ENCODE measurements at regions of chr1 and their contacts with region 1.

Region 1: DNA sequence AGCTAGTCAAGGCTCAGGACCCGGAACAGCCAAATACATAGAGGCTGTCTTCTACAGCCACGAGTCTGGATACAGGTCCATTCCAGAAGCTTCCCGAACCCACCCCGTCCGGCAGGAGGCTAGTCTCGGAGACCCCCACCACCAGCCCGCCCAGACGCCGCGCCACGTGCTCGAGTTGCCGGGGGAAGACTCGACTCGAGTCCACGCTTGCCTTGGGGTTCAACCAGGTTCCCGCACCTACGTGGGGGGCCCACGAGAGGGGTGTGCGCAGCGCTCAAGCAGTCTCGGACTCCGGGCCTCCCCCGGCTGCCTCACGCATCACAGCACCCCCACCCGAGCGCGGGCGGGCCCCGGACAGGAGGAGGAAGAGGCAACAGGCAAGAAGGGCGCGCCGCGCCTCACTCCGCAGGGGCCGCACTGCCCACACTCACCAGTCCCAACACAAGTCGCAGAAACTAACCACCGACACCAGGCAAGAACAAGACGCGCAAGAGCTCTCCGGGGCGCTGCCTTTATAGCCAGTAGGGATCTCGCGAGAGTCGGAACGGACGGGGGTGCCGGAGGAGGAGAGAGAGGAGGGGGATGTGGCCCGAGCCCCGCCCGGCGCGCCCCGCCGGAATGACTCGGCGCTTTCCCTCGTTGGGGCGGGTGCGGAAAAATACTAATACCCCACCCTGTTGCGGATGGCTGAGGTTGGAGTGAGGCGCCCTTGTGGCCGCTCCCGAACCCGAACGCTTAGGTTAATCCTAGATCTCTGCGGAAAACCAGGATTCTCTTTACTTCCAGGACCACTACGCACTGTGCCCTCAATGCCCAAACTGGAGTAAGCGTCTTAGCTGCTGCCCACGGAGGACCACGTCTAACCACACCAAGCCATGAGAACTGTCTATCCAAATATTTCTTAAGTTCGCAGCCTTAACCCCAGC is at the start of gene PRDX1:
- DNase-seq: peak; percentile 98
- ATAC-seq: peak; percentile 96 to 98 (median 97)
- H3K4me3 ChIP-seq: peak within 1 kb of the TSS; percentile 58 to 96 (median 86)
- H3K27ac ChIP-seq: peak within 1 kb of the TSS; percentile 73 to 98 (median 93)
- H3K4me1 ChIP-seq: peaks cover 2 to 44% (median 25%) of the 10 kb centered on the region in 9 donors
- H3K27me3 ChIP-seq: peaks cover 0 to 7% (median 0%) of the 10 kb centered on the region in 7 donors
- CTCF ChIP-seq: peak in 4 of 9 donors; percentile 7 to 37 (median 28)
- total RNA-seq, gene PRDX1: 212 to 421 (median 289) TPM

Region 2: DNA sequence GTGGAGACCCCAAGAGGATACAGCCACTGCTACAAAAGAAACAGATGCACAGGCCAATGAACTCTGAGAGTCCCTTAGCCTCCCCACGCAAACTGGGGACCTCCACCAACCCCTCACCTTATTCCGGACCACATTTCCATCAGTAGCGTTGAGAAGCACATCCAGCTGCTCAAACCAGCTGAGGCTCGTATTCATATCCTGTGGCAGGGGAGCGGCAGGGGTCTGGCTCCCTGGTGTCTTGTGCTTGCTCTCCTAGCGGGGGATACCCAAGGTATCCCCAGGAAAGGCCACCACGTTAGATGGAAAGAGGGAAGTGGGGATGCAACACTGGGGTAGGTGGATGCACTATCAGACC is 22.3 kb before region 1 on chr1:
- intact Hi-C with region 1: loop called in 1 of 10 experiments (anchors 1 kb)
- DNase-seq: no peak
- ATAC-seq: peak in 1 of 8 donors; percentile 2
- H3K4me3 ChIP-seq: peak overlapping the region; percentile 26 to 74 (median 62)
- H3K27ac ChIP-seq: peak overlapping the region in 7 of 10 donors; percentile 2 to 81 (median 73)
- H3K4me1 ChIP-seq: peaks cover 0 to 32% (median 17%) of the 10 kb centered on the region in 9 donors
- H3K27me3 ChIP-seq: no peaks in the 10 kb centered on the region
- CTCF ChIP-seq: no peak

Region 3: DNA sequence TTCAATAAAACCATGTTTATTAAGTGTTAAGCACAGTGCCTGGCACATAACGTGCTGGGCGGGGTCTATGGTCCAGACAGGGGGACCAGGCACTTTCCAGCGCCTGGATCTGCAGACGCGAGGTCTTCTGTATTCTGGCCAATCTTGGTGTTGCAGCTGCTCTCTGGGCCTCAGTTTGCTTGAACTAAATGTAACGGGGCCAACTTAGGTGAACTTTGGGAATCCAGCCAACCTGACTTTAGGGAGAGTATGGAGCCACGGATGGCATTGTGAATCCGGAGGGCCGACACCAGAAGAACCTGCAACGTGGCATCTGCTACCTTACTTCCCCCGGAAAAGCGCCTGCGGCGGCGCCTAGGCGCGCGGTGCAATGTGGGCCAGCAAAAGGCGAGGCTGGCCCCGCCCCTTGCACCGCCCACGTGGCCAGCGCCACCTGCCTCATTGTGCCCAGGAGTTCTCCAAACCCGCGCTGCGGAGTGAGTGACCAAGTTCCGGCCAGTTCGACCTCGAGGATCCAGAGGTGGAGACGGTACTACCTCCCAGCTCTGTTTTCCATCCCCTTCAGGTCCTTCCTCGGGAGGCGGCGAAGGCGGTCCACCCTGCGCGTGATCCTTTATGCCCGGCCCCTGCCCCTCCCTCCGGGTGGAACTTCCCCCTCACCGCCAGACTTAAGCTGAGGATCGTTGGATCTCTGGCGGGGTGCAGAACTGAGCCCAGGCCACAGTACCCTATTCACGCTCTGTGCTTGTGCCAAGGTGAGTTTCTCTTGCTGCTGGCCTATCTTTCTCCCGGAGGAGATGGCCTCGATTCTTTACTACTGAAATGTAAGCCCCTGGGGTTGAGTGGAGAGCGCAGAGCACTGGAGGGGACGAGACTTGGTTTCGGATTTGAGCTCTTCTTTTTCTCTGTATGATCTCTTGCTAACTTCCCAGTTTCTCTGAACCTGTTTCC is 29.0 kb after region 1 on chr1 and contains the start of gene AKR1A1:
- intact Hi-C with region 1: loop called in 2 of 10 experiments (anchors 2 kb)
- DNase-seq: peak; percentile 85 to 88
- ATAC-seq: peak; percentile 97 to 99 (median 98)
- H3K4me3 ChIP-seq: peak within 1 kb of the TSS; percentile 50 to 87 (median 70)
- H3K27ac ChIP-seq: peak within 1 kb of the TSS; percentile 49 to 91 (median 83)
- H3K4me1 ChIP-seq: peaks cover 0 to 26% (median 20%) of the 10 kb centered on the region in 9 donors
- H3K27me3 ChIP-seq: no peaks in the 10 kb centered on the region
- CTCF ChIP-seq: peak in 2 of 9 donors; percentile 11 to 13
- total RNA-seq, gene AKR1A1: 38.0 to 88.2 (median 44.3) TPM

Region 4: DNA sequence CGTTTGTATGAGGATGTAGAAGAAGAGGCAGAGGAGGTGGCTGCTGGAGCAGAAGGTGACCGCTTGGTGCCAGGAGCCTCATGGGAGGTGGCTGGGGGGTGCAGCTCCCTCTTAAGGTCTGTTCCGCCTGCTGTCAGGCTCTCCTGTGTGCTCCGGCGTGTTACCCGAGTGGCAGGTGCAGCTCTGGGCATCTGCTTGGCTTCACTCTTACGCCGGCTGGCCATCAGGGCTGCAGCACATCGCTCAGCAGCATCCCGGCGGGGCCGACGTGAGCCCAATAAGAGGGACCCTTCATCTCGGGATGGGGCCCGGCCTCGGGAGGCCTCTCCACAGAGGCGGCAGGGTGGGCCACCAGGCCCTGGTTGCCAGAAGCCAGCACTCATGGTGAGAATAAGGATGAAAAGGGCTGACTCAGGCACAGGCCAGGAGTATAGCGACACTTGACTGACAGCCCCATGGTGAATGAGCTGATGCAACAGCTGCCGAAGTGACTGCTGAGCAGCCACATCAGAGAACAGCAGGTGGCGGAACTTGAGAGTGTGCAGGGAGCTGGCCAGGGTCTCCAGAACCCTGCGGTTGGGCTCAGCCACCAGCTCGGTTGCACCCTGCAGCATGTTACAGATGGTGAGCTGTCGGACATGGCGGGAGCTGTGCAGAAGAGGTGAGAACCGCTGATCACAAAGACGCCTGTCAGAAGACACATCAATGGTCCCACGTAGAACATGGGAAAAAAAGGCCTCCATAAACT is 764.2 kb after region 1 on chr1:
- intact Hi-C with region 1: no loop called
- DNase-seq: no peak
- ATAC-seq: peak in 6 of 8 donors; percentile 12 to 46 (median 22)
- H3K4me3 ChIP-seq: no peak overlapping the region
- H3K27ac ChIP-seq: no peak overlapping the region
- H3K4me1 ChIP-seq: peaks cover 0 to 19% (median 3%) of the 10 kb centered on the region in 9 donors
- H3K27me3 ChIP-seq: no peaks in the 10 kb centered on the region
- CTCF ChIP-seq: no peak